ENCODE measurements at regions of chr10 and their contacts with region 1.

Region 1: GRCh38 chr10:111076191-111076681 is 593 bp upstream of the ADRA2A start:
- DNase-seq: peak; percentile 79 to 90 (median 86)
- H3K4me3 ChIP-seq: peak overlapping the region; percentile 51
- H3K27ac ChIP-seq: peak overlapping the region; percentile 66 to 81
- H3K4me1 ChIP-seq: peaks cover 13% of the 10 kb centered on the region
- H3K27me3 ChIP-seq: no peaks in the 10 kb centered on the region
- CTCF ChIP-seq: peak; percentile 87 to 92 (median 88)
- EP300 ChIP-seq: no peak
- POLR2A ChIP-seq: no peak

Region 2: GRCh38 chr10:110746254-110746826 is 329.9 kb before region 1 on chr10:
- intact Hi-C with region 1: loop called in 1 of 4 experiments (anchors 10 kb)
- DNase-seq: peak; percentile 38 to 61 (median 52)
- H3K4me3 ChIP-seq: no peak overlapping the region
- H3K27ac ChIP-seq: no peak overlapping the region
- H3K4me1 ChIP-seq: no peaks in the 10 kb centered on the region
- H3K27me3 ChIP-seq: no peaks in the 10 kb centered on the region
- CTCF ChIP-seq: peak; percentile 27 to 60 (median 50)
- EP300 ChIP-seq: no peak
- POLR2A ChIP-seq: no peak

Region 3: GRCh38 chr10:110883924-110884323 is 192.3 kb before region 1 on chr10:
- intact Hi-C with region 1: loop called in 1 of 4 experiments (anchors 10 kb)
- DNase-seq: no peak
- H3K4me3 ChIP-seq: no peak overlapping the region
- H3K27ac ChIP-seq: peak overlapping the region in 1 of 2 donors; percentile 19
- H3K4me1 ChIP-seq: peaks cover 3% of the 10 kb centered on the region
- H3K27me3 ChIP-seq: no peaks in the 10 kb centered on the region
- CTCF ChIP-seq: no peak
- EP300 ChIP-seq: no peak
- POLR2A ChIP-seq: no peak

Region 4: GRCh38 chr10:111186358-111186757 is 110.1 kb after region 1 on chr10:
- intact Hi-C with region 1: loop called in 1 of 4 experiments (anchors 10 kb)
- DNase-seq: no peak
- H3K4me3 ChIP-seq: no peak overlapping the region
- H3K27ac ChIP-seq: no peak overlapping the region
- H3K4me1 ChIP-seq: peaks cover 11% of the 10 kb centered on the region
- H3K27me3 ChIP-seq: no peaks in the 10 kb centered on the region
- CTCF ChIP-seq: no peak
- EP300 ChIP-seq: no peak
- POLR2A ChIP-seq: no peak

Region 5: GRCh38 chr10:111360260-111360925 is 284.2 kb after region 1 on chr10:
- intact Hi-C with region 1: loop called in 1 of 4 experiments (anchors 10 kb)
- DNase-seq: peak; percentile 20 to 43 (median 31)
- H3K4me3 ChIP-seq: no peak overlapping the region
- H3K27ac ChIP-seq: no peak overlapping the region
- H3K4me1 ChIP-seq: no peaks in the 10 kb centered on the region
- H3K27me3 ChIP-seq: no peaks in the 10 kb centered on the region
- CTCF ChIP-seq: peak in 2 of 3 donors; percentile 22 to 33
- EP300 ChIP-seq: no peak
- POLR2A ChIP-seq: no peak